ENCODE measurements at regions of chr5 and their contacts with region 1.

Region 1: DNA sequence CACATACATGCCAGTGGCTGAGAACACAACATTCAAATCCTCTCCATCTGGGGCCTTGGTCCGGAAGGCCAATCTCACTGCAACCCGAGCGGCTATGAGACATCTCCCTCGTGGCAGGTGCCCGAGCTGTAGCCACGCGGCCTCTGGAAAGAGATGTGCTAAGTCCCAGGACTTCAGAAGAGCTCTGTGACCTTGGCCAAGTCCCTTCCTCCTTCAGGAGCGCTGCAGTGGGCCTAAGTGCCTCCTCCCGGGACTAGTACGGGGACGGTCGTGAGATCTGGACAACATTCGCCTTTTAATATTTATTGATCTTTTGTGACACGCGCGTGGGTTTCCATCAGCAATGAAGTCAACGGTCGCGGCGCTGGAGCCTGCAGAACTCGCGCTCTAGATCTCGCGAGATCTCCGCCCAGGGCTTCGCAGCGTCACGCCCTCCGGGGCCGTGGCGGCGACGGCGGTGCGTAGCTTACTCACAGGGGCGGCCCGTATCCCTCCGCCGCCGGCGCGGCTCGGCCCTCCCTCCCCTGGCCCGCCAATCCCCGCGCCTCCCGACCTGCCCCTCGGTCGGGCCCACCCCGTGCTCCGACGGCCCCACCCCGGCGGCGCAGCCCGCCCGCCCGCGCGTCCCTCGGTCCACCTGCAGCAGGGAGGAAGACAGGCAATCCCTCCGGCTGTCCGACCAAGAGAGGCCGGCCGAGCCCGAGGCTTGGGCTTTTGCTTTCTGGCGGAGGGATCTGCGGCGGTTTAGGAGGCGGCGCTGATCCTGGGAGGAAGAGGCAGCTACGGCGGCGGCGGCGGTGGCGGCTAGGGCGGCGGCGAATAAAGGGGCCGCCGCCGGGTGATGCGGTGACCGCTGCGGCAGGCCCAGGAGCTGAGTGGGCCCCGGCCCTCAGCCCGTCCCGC is at the start of gene UBE2D2:
- DNase-seq: peak; percentile 99
- H3K4me3 Mint-ChIP-seq: peak within 1 kb of the TSS; percentile 98
- H3K27ac Mint-ChIP-seq: peak within 1 kb of the TSS; percentile 94
- H3K4me1 Mint-ChIP-seq: peaks cover 33% of the 10 kb centered on the region
- H3K27me3 Mint-ChIP-seq: no peaks in the 10 kb centered on the region
- total RNA-seq, gene UBE2D2: 272 and 275 TPM in 2 replicates

Region 2: GRCh38 chr5:138542956-138543729 is 1017.9 kb before region 1 on chr5 and contains the start of gene ETF1:
- intact Hi-C with region 1: loop called (anchors 10 kb)
- DNase-seq: peak; percentile 100
- H3K4me3 Mint-ChIP-seq: peak within 1 kb of the TSS; percentile 99
- H3K27ac Mint-ChIP-seq: peak within 1 kb of the TSS; percentile 100
- H3K4me1 Mint-ChIP-seq: peaks cover 49% of the 10 kb centered on the region
- H3K27me3 Mint-ChIP-seq: no peaks in the 10 kb centered on the region
- total RNA-seq, gene ETF1: 200 and 205 TPM in 2 replicates

Region 3: GRCh38 chr5:139341650-139342422 is 219.2 kb before region 1 on chr5 and contains the start of gene PAIP2:
- intact Hi-C with region 1: loop called (anchors 2 kb)
- DNase-seq: peak; percentile 99
- H3K4me3 Mint-ChIP-seq: peak within 1 kb of the TSS; percentile 97
- H3K27ac Mint-ChIP-seq: peak within 1 kb of the TSS; percentile 100
- H3K4me1 Mint-ChIP-seq: peaks cover 39% of the 10 kb centered on the region
- H3K27me3 Mint-ChIP-seq: no peaks in the 10 kb centered on the region
- total RNA-seq, gene PAIP2: 83.3 and 93.8 TPM in 2 replicates

Region 4: DNA sequence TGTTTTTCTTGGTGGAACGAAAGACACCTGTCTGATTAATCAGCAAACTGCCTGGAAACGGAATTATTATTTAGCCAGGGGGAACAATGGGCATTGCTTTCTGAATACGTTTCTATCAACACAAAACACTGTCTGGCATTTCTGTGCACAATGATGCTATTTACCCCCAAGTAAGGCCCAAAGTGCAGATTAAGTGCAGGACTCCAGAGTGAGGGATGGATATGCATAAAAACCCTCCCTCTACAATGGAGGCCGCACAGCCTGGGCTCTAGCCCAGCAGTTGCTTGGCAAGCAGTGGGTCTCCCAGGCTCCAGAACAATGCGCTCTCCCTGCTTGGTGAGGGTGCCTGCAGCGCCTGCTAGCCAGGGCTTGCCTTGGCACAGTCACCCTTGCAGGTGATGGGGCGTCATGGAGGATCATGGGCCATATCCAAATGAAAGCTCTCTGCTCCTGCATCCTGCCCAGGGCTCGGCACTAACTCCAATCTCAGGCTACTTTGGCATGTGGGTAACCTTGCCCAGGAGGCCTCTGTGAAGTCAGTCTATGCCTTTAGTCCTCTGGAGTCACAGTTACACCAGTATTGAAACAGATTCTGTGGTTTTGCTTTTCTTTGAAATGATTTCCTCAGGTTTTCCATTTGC is 145.7 kb before region 1 on chr5:
- intact Hi-C with region 1: loop called (anchors 2 kb)
- DNase-seq: peak; percentile 81
- H3K4me3 Mint-ChIP-seq: peak overlapping the region; percentile 64
- H3K27ac Mint-ChIP-seq: peak overlapping the region; percentile 95
- H3K4me1 Mint-ChIP-seq: peaks cover 60% of the 10 kb centered on the region
- H3K27me3 Mint-ChIP-seq: no peaks in the 10 kb centered on the region

Region 5: GRCh38 chr5:139482050-139482889 is 78.7 kb before region 1 on chr5 and contains the start of gene STING1:
- intact Hi-C with region 1: loop called (anchors 1 kb)
- DNase-seq: peak; percentile 89
- H3K4me3 Mint-ChIP-seq: peak within 1 kb of the TSS; percentile 89
- H3K27ac Mint-ChIP-seq: peak within 1 kb of the TSS; percentile 96
- H3K4me1 Mint-ChIP-seq: peaks cover 38% of the 10 kb centered on the region
- H3K27me3 Mint-ChIP-seq: no peaks in the 10 kb centered on the region
- total RNA-seq, gene STING1: 198 and 201 TPM in 2 replicates

Region 6: GRCh38 chr5:139524932-139525585 is 35.9 kb before region 1 on chr5:
- intact Hi-C with region 1: no loop called
- DNase-seq: no peak
- H3K4me3 Mint-ChIP-seq: no peak overlapping the region
- H3K27ac Mint-ChIP-seq: no peak overlapping the region
- H3K4me1 Mint-ChIP-seq: no peaks in the 10 kb centered on the region
- H3K27me3 Mint-ChIP-seq: no peaks in the 10 kb centered on the region

Region 7: DNA sequence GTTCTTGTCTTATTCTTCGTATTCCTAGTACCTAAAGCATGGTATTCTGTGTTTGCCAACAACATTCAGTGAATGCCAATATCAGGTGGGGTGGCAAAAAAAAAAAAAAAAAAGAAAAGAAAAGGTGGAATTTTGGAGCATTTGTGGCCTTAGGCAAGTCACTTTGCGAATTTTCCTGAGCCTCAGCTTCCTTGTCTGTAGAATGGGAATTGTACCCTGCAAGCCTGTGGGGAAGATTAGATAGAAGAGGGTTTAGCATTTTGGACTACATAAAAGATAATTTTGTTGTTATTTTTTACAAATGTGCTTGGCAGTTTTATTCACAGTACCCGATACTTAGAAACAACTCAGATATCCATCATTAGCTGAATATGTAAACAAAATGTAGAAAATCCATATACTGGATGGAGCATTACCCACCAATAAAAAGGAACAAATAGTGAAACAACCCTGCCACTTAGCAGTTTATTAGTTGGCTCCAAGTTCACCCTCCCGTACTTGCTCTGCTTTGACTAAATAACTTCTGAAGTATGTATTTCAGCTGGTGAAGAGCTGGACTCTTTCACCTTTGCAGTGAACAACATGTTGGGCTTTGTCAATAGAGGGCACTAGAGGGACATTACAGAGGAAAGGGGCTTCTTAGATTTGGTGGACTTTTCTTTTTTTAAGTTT is 13.8 kb after region 1 on chr5:
- intact Hi-C with region 1: loop called (anchors 1 kb)
- DNase-seq: peak; percentile 76
- H3K4me3 Mint-ChIP-seq: no peak overlapping the region
- H3K27ac Mint-ChIP-seq: peak overlapping the region; percentile 68
- H3K4me1 Mint-ChIP-seq: peaks cover 58% of the 10 kb centered on the region
- H3K27me3 Mint-ChIP-seq: no peaks in the 10 kb centered on the region

Region 8: DNA sequence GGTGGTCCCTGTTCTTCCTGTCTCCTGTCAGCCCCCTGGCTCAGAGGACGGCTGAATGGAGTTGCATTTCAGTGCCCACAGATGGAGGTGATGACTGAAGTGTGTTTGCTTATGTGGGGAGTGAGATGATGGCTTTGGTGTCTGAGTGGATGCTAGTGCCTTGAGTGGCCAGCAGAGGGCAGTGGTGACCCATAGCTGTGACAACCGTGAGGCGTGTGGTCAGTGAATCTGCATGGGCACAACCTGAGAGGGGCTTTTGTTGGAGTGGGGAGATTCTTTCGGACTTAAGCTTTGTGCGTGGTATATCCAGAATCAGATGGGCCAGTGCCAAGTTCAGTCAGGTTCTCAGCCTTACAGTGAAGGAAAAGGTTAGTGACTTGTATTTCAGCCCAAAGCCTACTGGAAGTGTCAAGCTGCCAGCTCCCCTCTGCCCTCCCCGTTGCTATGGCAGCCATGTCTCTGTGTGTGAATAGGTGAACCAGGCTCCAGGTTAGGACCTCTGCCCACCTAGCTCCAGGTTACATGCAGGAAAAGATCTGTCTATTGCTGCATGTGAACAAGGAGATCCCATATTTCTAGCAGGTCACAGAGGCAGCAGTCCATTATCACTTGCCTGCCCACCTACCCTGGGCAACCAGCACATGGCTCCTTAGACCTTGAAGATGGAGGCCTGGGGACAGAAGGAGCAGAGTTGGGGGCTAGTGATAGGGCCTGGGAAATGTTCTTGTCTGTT is 72.5 kb after region 1 on chr5:
- intact Hi-C with region 1: loop called (anchors 5 kb)
- DNase-seq: peak; percentile 89
- H3K4me3 Mint-ChIP-seq: no peak overlapping the region
- H3K27ac Mint-ChIP-seq: peak overlapping the region; percentile 1
- H3K4me1 Mint-ChIP-seq: peaks cover 33% of the 10 kb centered on the region
- H3K27me3 Mint-ChIP-seq: no peaks in the 10 kb centered on the region

Measured in activated CD4-positive, alpha-beta T cell treated with anti-CD3 and anti-CD28 coated beads, Interleukin-2, amount 10 ng/mL, durations not matched to agents 24 days and 14 days (primary cell).